Endothelial cell of umbilical vein (primary cell): ENCODE measurements at regions of chr7 and their contacts with region 1.

Region 1: DNA sequence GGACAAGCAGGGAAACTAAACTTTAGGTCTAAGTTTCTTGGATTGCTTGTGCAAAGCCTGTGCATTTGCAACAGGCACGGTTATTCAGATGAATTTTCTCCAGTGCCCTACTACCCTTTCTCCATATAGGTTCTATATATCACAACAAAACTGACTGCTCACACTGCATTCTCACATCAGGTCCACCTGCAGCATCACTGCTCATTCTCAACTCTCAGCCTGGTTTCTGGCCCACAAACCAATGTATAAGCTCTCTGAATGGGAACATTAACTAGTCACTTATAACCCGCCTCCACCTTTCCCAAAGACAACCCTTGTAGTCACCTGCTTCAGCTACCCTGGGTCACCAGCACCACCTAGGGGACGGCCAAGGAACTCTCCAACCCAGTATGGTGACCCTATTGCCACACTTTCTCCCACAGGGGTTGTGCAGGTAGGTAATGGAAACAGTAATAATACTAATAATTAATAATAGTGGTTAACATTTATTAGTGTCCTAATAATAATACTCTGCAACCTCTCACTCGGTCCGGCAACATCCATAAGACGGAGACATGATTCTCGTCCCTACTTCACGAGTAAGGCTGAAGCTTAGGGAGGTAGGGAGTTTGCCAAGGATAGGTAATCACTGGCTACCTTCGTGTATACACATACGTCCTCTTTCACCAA is 97.3 kb downstream of the CLEC2L start:
- DNase-seq: peak; percentile 9
- H3K4me3 ChIP-seq: no peak overlapping the region
- H3K27ac ChIP-seq: no peak overlapping the region
- H3K4me1 ChIP-seq: no peaks in the 10 kb centered on the region
- H3K27me3 ChIP-seq: no peaks in the 10 kb centered on the region
- CTCF ChIP-seq: peak; percentile 59 to 63
- POLR2A ChIP-seq: no peak

Region 2: DNA sequence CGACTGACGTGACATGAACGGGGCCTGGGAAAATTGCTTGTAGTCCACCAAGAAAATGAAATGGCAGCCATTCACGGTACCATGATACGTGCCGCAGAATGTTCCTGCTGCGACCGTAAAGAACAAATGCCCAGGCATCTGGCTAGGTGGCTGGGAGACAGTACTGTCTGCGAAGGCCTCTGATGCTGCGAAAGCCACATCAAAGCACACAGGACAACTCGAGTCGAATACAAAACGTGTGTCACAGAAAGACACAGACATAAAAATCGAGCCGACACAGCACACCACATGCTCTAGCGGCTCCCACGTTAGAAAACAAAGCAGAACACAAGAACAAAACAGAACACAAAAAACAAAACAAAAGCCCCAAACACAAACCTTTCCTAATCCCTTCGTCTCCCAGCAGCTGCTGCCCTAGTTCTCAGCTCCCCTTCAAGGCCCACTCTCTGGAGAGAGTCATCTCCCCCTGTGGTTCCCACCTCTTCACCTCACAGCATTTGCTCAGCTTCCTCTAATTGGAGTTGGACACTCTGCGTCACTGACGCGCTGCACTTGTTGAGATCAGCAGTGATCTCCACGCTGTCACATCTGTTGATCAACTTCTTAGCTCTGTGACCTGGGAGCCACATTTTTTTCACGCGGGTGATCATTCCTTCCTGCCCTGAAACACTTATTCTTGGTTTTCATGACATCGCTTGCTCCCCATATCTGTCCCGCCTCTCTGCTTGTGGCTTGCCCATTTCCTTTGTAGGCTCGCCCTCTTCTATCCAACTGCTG is 14.9 kb after region 1 on chr7:
- CTCF ChIA-PET with region 1: interaction called, 11 read pairs
- POLR2A ChIA-PET with region 1: no interaction called
- dilution Hi-C with region 1: no loop called
- intact Hi-C with region 1: no loop called
- DNase-seq: no peak
- H3K4me3 ChIP-seq: no peak overlapping the region
- H3K27ac ChIP-seq: no peak overlapping the region
- H3K4me1 ChIP-seq: no peaks in the 10 kb centered on the region
- H3K27me3 ChIP-seq: no peaks in the 10 kb centered on the region
- CTCF ChIP-seq: no peak
- POLR2A ChIP-seq: no peak

Region 3: GRCh38 chr7:139995017-139995931 is 374.5 kb after region 1 on chr7:
- CTCF ChIA-PET with region 1: interaction called, 112 read pairs
- POLR2A ChIA-PET with region 1: no interaction called
- dilution Hi-C with region 1: loop called (anchors 25 kb)
- intact Hi-C with region 1: no loop called
- DNase-seq: no peak
- H3K4me3 ChIP-seq: no peak overlapping the region
- H3K27ac ChIP-seq: no peak overlapping the region
- H3K4me1 ChIP-seq: no peaks in the 10 kb centered on the region
- H3K27me3 ChIP-seq: no peaks in the 10 kb centered on the region
- CTCF ChIP-seq: no peak
- POLR2A ChIP-seq: no peak

Region 4: DNA sequence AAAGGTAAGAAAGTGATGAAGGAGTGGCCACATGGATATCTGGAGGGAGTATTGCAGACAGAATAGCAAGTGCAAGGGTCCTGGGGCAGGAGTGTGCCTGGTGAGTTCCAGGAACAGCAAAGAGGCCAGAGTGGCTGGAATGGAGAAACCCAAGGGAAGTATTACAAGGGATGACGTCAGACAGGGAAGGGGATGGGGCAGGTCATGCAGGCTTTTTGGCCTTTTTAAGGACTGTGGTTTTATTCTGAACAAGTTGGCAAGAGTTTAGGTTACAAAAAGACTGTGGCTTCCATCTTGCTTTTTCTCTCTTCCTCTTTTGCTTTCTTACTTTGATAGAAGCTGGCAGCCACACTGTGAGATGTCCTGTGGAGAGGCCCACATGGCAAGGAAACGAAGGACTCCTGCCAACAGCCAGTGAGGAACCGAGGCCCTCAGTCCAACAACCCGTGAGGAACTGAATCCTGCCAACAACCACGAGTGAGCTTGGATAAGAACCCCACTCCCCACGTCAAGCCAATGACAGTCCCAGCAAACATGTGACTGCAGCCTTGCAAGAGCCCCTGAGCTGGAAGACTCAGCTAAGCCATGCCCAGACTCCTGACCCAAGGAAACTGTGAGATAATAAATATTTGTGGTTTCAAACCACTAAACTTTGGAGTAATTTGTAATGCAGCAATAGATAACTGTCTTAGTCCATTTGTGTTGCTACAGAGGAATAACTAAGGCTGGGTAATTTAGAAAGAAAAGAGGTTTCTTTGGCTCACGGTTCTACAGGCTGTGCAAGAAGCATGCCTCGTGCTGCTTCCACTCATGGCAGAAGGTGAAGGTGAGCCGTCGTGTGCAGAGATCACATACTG is 575.8 kb after region 1 on chr7:
- CTCF ChIA-PET with region 1: no interaction called
- POLR2A ChIA-PET with region 1: no interaction called
- dilution Hi-C with region 1: no loop called
- intact Hi-C with region 1: no loop called
- DNase-seq: no peak
- H3K4me3 ChIP-seq: no peak overlapping the region
- H3K27ac ChIP-seq: no peak overlapping the region
- H3K4me1 ChIP-seq: peaks cover 6% of the 10 kb centered on the region
- H3K27me3 ChIP-seq: peaks cover 0 to 3% of the 10 kb centered on the region in 2 experiments
- CTCF ChIP-seq: no peak
- POLR2A ChIP-seq: no peak